Panc1 (cell line): ENCODE measurements at regions of chr16 and their contacts with region 1.

Region 1: GRCh38 chr16:75206749-75207451 is at the start of gene CTRB2:
- DNase-seq: no peak
- ATAC-seq: peak; percentile 40
- H3K4me3 ChIP-seq: no peak within 1 kb of the TSS
- H3K27ac ChIP-seq: no peak within 1 kb of the TSS
- H3K4me1 ChIP-seq: no peaks in the 10 kb centered on the region
- H3K27me3 ChIP-seq: no peaks in the 10 kb centered on the region
- CTCF ChIP-seq: no peak
- total RNA-seq, gene CTRB2: 5.0 TPM

Region 2: DNA sequence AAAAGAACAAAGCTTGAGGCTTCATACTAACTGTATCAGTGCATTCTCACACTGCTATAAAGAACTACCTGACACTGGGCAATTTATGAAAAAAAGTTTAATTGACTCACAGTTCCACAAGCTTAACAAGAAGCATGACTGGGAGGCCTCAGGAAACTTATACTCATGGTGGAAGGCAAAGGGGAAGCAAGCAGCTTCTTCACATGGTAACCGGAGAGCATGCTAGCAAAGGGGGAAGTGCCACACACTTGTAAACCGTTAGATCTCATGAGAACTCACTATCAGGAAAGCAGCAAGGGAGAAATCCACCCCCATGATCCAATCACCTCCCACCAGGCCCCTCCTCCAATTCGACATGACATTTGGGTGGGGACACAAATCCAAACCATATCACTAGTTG is 25.3 kb before region 1 on chr16:
- CTCF ChIA-PET with region 1: interaction called, 14 read pairs
- POLR2A ChIA-PET with region 1: no interaction called
- in situ Hi-C with region 1: no loop called
- intact Hi-C with region 1: no loop called
- DNase-seq: no peak
- ATAC-seq: no peak
- H3K4me3 ChIP-seq: no peak overlapping the region
- H3K27ac ChIP-seq: no peak overlapping the region
- H3K4me1 ChIP-seq: no peaks in the 10 kb centered on the region
- H3K27me3 ChIP-seq: no peaks in the 10 kb centered on the region
- CTCF ChIP-seq: no peak

Region 3: DNA sequence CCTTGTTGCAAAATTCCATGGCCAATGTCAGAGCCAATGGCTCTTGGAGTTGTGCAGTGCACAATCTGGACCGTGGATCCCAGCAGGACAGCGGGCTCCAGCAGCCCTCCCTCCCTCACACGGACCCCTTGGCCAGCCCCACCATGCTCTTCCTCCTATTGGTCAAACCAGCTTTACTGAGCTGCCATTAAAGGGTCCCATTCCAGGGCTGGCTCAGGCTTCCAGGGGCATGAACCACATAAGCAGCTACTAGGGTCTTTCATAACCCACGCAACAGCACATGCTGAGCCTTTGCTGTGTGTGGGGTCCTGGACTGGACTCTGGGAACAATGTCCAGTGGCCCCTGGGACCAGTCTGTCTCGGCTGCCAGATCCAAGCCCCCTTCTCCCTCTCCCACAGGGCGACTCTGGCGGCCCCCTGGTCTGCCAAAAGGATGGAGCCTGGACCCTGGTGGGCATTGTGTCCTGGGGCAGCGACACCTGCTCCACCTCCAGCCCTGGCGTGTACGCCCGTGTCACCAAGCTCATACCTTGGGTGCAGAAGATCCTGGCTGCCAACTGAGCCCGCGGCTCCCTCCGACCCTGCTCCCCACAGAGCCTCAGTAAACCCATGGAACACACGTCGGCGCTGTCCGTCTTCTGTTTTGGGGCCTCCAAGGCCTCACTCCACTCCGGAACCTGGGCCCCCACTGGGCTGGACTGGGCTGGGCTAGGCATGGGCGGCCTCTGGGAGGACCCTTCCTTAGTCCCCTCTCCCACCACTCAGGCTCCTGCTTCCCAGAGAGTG is 17.6 kb after region 1 on chr16:
- CTCF ChIA-PET with region 1: no interaction called
- POLR2A ChIA-PET with region 1: no interaction called
- in situ Hi-C with region 1: no loop called
- intact Hi-C with region 1: loop called (anchors 2 kb)
- DNase-seq: no peak
- ATAC-seq: peak; percentile 31
- H3K4me3 ChIP-seq: no peak overlapping the region
- H3K27ac ChIP-seq: no peak overlapping the region
- H3K4me1 ChIP-seq: peaks cover 3% of the 10 kb centered on the region; the same call in 1 of the 2 replicates
- H3K27me3 ChIP-seq: no peaks in the 10 kb centered on the region
- CTCF ChIP-seq: no peak

Region 4: GRCh38 chr16:75443298-75443697 is 236.4 kb after region 1 on chr16:
- CTCF ChIA-PET with region 1: no interaction called
- POLR2A ChIA-PET with region 1: no interaction called
- in situ Hi-C with region 1: no loop called
- intact Hi-C with region 1: no loop called
- DNase-seq: no peak
- ATAC-seq: no peak
- H3K4me3 ChIP-seq: no peak overlapping the region
- H3K27ac ChIP-seq: no peak overlapping the region
- H3K4me1 ChIP-seq: no peaks in the 10 kb centered on the region
- H3K27me3 ChIP-seq: no peaks in the 10 kb centered on the region
- CTCF ChIP-seq: no peak